Activated naive CD4-positive, alpha-beta T cell treated with anti-CD3 and anti-CD28 coated beads for 36 hours (primary cell): ENCODE measurements at regions of chr16 and their contacts with region 1.

Region 1: DNA sequence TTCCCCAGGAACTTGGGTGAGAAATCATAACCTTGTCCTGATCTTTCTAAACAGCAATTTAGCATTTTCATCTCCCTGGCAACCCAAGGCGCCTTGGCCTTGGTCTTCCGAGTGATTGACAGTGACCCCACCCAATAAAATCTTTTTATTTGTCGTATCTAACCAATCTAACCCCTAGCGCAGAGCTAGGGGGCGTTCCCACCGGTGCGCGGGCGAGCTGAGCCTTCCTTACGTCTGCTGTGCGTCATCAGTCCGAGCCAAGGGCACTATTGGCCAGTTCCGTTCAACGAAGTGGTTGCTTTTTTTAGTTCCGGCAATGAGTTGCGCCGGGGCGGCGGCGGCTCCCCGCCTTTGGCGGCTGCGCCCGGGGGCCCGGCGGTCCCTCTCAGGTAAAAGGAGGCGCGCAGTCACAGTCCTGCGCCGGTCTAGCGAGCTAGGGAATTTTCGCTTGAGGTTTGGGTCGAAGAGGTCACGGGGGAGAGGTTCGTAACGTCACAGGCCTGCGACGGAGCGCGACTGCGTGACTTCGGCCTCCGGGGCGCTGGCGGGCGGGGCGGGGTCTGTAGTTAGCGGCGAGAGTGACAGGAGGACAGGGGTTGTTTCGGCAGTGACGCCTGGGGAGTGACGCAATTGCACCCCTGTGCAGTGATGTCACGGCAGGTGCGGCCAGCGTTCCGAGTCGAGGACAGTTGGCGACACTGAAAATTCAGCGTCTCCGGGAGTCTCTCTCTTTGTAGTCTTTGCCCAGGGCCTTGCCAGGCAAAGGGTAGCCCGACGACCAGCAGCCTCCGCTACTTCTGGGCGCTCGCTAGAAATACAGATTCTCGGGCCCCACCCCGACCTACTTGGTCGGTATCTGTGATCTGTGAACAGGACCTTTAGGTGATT is at the start of gene COQ7:
- DNase-seq: peak; percentile 99
- H3K4me3 Mint-ChIP-seq: peak within 1 kb of the TSS; percentile 89
- H3K27ac Mint-ChIP-seq: peak within 1 kb of the TSS; percentile 92
- H3K4me1 Mint-ChIP-seq: peaks cover 8% of the 10 kb centered on the region
- H3K27me3 Mint-ChIP-seq: no peaks in the 10 kb centered on the region
- total RNA-seq, gene COQ7: 16.4 to 21.3 TPM

Region 2: GRCh38 chr16:18789850-18790724 is 277.5 kb before region 1 on chr16 and contains the start of gene RPS15A:
- CTCF ChIA-PET with region 1: no interaction called
- intact Hi-C with region 1: loop called (anchors 1 kb)
- DNase-seq: peak; percentile 96
- H3K4me3 Mint-ChIP-seq: peak within 1 kb of the TSS; percentile 94
- H3K27ac Mint-ChIP-seq: peak within 1 kb of the TSS; percentile 96
- H3K4me1 Mint-ChIP-seq: peaks cover 45% of the 10 kb centered on the region
- H3K27me3 Mint-ChIP-seq: no peaks in the 10 kb centered on the region
- total RNA-seq, gene RPS15A: 2,432 to 2,476 TPM

Region 3: DNA sequence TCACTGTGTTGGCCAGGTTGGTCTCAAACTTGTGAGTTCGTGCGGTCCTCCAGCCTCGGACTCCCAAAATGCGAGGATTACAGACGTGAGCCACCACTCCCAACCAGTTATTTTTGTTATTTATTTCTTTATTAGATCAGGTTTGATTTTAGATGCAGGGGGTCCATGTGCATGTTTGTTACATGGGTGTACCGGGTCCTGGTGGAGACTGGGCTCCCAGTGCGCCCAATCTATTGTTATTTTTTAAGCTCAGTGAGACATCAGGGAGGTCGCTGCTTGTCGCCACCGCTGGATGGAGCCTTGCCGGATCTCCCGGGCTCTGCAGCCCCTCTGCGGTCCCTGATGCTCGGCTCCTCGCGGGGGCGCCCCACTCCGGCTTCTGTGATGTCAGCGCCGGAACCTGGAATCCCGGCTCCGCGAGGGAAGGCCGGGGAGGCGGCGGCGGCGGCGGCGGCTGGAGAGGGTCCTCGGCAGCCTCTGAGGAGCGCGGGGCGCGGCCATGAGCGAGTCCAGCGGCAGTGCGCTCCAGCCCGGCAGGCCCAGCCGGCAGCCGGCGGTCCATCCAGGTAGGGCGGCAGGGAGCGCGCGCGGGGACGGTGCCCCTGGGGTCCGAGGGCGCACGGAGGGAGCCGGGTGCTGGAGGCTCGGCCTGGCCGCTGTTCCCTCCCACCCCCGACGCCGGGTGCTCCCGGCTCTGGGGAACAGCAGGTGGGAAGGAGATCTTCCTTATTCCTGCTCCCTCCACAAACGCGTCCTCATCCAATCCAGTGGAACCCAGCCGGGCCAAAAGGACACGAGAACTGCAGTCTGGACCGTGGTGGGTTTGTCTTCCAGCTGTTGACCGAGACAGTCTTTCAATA is 83.8 kb before region 1 on chr16 and contains the start of gene TMC7:
- CTCF ChIA-PET with region 1: interaction called, 4 read pairs
- intact Hi-C with region 1: loop called (anchors 1 kb)
- DNase-seq: peak; percentile 57
- H3K4me3 Mint-ChIP-seq: no peak within 1 kb of the TSS
- H3K27ac Mint-ChIP-seq: no peak within 1 kb of the TSS
- H3K4me1 Mint-ChIP-seq: no peaks in the 10 kb centered on the region
- H3K27me3 Mint-ChIP-seq: peaks cover 32% of the 10 kb centered on the region
- total RNA-seq, gene TMC7: not detected

Region 4: DNA sequence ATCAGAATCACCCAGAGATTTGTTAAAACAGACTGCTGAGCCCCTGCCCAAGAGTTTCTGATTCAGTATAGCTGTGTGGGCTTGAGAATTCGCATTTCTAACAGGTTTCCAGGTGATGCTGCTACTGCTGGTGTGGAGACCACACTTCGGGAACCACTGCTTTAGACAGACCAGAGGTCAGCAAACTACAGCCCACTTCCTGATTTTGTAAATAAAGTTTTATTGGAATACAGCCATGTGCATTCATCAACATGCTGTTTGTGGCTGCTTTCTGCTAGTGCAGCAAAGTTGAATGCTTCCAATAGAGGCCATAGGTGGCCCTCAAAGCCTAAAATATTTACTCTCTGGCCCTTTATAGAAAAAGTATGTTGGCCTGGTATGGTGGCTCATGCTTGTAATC is 185.3 kb after region 1 on chr16:
- CTCF ChIA-PET with region 1: no interaction called
- intact Hi-C with region 1: no loop called
- DNase-seq: no peak
- H3K4me3 Mint-ChIP-seq: no peak overlapping the region
- H3K27ac Mint-ChIP-seq: no peak overlapping the region
- H3K4me1 Mint-ChIP-seq: no peaks in the 10 kb centered on the region
- H3K27me3 Mint-ChIP-seq: peaks cover 10% of the 10 kb centered on the region

Region 5: DNA sequence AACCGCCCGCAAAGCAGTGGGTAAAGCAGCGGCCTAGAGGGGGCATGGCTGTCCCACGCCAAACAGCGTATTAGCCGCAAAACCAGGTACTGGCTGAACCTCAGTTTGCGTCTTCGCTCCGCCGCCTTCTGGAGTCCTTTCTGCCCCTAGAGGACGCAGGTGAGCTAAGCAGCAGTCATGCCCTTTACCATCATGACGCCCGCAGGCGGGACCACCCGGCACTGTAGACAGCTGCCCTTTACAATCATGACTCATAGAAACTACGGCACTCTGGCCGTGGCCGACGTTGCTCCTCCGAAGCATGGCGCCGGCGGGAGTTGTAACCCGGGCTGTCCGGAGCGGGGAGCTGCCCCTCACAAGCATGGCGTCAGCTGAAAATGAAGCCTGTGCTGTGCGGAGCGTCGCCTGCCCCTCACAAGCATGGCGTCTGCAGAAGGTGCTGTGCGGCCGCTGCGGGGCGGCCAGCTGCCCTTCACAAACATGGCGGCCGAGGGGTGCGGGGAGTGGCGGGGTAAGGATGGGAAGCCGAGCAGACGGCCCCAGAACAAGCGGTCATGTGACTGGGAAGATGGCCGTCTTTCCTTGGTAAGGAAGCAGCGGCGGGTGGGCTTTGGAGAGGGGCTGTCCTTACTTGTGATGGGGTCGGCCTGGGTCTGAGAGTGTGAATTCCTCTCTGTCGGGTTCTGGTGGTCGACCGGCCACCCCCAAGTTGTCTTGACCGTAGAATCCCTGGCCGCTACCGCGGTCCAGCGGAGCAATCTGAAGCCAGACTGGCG is 487.8 kb after region 1 on chr16 and contains the start of gene VPS35L:
- CTCF ChIA-PET with region 1: no interaction called
- intact Hi-C with region 1: loop called (anchors 1 kb)
- DNase-seq: peak; percentile 93
- H3K4me3 Mint-ChIP-seq: peak within 1 kb of the TSS; percentile 91
- H3K27ac Mint-ChIP-seq: peak within 1 kb of the TSS; percentile 89
- H3K4me1 Mint-ChIP-seq: peaks cover 17% of the 10 kb centered on the region
- H3K27me3 Mint-ChIP-seq: no peaks in the 10 kb centered on the region
- total RNA-seq, gene VPS35L: 30.3 to 32.4 TPM

Region 6: DNA sequence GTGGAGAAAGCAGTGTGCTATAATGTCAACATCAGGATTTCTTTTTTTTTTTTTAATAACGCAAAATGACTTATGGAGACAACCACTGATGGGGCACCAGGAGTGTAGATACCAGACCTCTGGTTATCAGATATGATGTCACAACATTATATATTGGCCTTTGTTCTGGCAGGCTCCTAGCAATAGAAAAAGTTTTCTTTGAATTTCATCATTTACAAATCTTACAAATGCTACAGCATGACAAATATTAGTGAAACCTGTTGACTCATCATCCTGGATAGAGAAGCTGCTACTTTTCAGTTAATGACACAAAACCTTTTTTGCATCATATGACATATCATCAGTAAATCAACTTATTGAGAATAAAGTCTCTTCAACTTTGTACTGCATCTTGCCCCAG is 1667.9 kb after region 1 on chr16:
- CTCF ChIA-PET with region 1: interaction called, 3 read pairs
- intact Hi-C with region 1: loop called (anchors 10 kb)
- DNase-seq: no peak
- H3K4me3 Mint-ChIP-seq: no peak overlapping the region
- H3K27ac Mint-ChIP-seq: peak overlapping the region; percentile 77
- H3K4me1 Mint-ChIP-seq: peaks cover 44% of the 10 kb centered on the region
- H3K27me3 Mint-ChIP-seq: no peaks in the 10 kb centered on the region